ENCODE measurements at regions of chr16 and their contacts with region 1.

Region 1: GRCh38 chr16:67883872-67884261 is 818 bp upstream of the NRN1L start:
- DNase-seq: peak in 1 of 2 experiments; percentile 90
- H3K4me3 ChIP-seq: no peak overlapping the region
- H3K27ac ChIP-seq: no peak overlapping the region
- H3K4me1 ChIP-seq: peaks cover 5 to 15% (median 11%) of the 10 kb centered on the region in 4 experiments
- H3K27me3 ChIP-seq: no peaks in the 10 kb centered on the region
- CTCF ChIP-seq: peak; percentile 87 to 94 (median 88)
- EP300 ChIP-seq: peak in 1 of 2 experiments; percentile 31; a peak in 1 of 3 replicates
- POLR2A ChIP-seq: no peak
- RAD21 ChIP-seq: peak; percentile 83 to 87

Region 2: GRCh38 chr16:67775273-67775672 is 108.6 kb before region 1 on chr16:
- CTCF ChIA-PET with region 1: no interaction called
- POLR2A ChIA-PET with region 1: no interaction called
- DNase-seq: no peak
- H3K4me3 ChIP-seq: no peak overlapping the region
- H3K27ac ChIP-seq: no peak overlapping the region
- H3K4me1 ChIP-seq: peaks cover 0 to 1% (median 0%) of the 10 kb centered on the region in 4 experiments; a peak in 1 of 7 replicates
- H3K27me3 ChIP-seq: no peaks in the 10 kb centered on the region
- CTCF ChIP-seq: no peak
- EP300 ChIP-seq: no peak
- POLR2A ChIP-seq: no peak
- RAD21 ChIP-seq: no peak

Region 3: DNA sequence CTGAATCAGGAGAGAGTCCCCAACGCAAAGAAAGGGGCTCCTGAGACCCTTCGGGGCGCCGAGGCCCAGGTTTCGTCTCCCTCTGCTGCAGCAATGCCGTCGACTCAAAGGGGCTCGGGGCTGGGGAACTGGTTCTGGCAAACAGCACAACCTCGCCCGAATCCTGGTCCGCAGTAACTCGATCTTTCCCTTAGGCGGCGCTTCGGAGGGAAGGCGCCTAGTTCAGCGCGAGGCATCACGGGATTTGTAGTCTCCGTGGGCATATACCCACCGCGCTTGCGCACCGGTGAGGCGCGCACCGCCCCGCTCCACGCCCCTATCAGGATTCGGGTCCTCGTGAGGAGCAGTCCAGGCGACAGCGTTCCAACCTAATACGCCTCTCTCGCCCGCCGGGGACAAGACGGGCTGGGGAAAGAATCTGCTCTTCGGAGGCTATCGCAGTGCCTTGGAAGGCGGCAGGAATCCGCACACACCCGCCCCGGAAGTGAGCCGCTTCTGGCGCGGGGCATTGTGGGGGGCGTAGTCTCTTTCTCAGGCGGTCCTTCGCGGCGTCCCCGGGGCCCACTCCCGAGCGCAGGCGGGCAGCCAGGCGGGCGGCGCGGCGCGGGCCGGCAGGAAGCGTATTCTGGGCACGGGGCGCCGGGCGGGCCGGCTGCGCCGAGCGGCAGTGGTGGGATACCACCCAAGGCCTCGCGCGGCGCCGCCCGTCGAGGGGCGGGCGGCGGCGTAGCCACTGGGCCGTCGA is 41.9 kb before region 1 on chr16 and contains the start of gene THAP11:
- CTCF ChIA-PET with region 1: interaction called, 15 read pairs
- POLR2A ChIA-PET with region 1: interaction called, 5 read pairs
- DNase-seq: peak; percentile 91 to 97
- H3K4me3 ChIP-seq: peak within 1 kb of the TSS; percentile 84 to 97 (median 95)
- H3K27ac ChIP-seq: peak within 1 kb of the TSS; percentile 97
- H3K4me1 ChIP-seq: peaks cover 8 to 32% (median 17%) of the 10 kb centered on the region in 4 experiments
- H3K27me3 ChIP-seq: no peaks in the 10 kb centered on the region
- CTCF ChIP-seq: peak; percentile 81 to 94 (median 87)
- EP300 ChIP-seq: no peak
- POLR2A ChIP-seq: peak; percentile 83 to 93
- RAD21 ChIP-seq: peak; percentile 24 to 38; a peak in 3 of 4 replicates
- total RNA-seq, gene THAP11: 54.8 and 56.4 TPM in 2 replicates

Region 4: DNA sequence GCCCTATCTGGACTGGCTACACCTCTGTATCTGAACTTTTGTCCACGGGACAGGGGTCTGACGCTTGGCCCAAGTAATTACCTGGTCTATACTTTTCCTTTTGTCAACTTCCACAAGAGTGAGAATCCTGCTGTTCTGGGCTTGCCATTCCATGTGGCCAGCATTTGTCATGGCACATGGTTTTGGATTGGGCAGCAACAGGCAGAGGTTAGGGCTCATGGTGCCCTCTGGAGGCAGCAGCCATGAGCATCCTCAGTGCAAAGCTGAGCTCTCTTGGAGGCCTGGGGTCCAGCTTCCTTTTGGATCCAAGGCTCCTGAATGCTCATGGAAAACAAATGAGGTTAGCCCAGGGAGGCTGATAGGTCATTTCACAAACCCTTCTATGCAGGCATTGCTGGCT is 18.6 kb before region 1 on chr16:
- CTCF ChIA-PET with region 1: interaction called, 20 read pairs
- POLR2A ChIA-PET with region 1: interaction called, 3 read pairs
- DNase-seq: no peak
- H3K4me3 ChIP-seq: no peak overlapping the region
- H3K27ac ChIP-seq: no peak overlapping the region
- H3K4me1 ChIP-seq: peaks cover 0 to 4% (median 0%) of the 10 kb centered on the region in 4 experiments; a peak in 2 of 7 replicates
- H3K27me3 ChIP-seq: no peaks in the 10 kb centered on the region
- CTCF ChIP-seq: peak; percentile 76 to 83 (median 79)
- EP300 ChIP-seq: no peak
- POLR2A ChIP-seq: no peak
- RAD21 ChIP-seq: peak; percentile 80 to 82

Region 5: DNA sequence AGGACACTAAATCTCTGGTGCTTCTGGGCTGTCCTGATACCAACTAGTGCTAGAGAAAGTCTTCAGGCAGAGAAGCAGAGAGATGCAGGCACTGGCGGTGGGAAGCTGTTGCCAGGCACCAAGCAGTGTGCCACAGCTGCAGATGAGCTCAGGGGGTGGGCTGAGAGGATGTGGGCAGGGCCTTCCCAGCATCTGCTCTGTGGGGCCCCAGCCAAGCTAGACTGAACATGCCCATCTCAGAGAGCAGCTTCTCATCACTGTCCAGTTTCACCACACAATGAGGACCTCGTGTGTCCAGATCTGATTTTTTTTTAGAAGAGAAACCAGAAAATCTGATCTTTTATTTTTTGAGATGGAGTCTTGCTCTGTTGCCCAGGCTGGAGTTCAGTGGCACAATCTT is 26.3 kb after region 1 on chr16:
- CTCF ChIA-PET with region 1: interaction called, 46 read pairs
- POLR2A ChIA-PET with region 1: interaction called, 4 read pairs
- DNase-seq: no peak
- H3K4me3 ChIP-seq: no peak overlapping the region
- H3K27ac ChIP-seq: no peak overlapping the region
- H3K4me1 ChIP-seq: peaks cover 0 to 6% (median 3%) of the 10 kb centered on the region in 4 experiments; a peak in 4 of 7 replicates
- H3K27me3 ChIP-seq: no peaks in the 10 kb centered on the region
- CTCF ChIP-seq: no peak
- EP300 ChIP-seq: no peak
- POLR2A ChIP-seq: no peak
- RAD21 ChIP-seq: no peak

Region 6: GRCh38 chr16:67928561-67929364 is 44.9 kb after region 1 on chr16:
- CTCF ChIA-PET with region 1: interaction called, 623 read pairs
- POLR2A ChIA-PET with region 1: interaction called, 45 read pairs
- DNase-seq: peak in 1 of 2 experiments; percentile 91
- H3K4me3 ChIP-seq: no peak overlapping the region
- H3K27ac ChIP-seq: no peak overlapping the region
- H3K4me1 ChIP-seq: peaks cover 0 to 8% (median 4%) of the 10 kb centered on the region in 4 experiments; a peak in 5 of 7 replicates
- H3K27me3 ChIP-seq: no peaks in the 10 kb centered on the region
- CTCF ChIP-seq: peak; percentile 96 to 100 (median 96)
- EP300 ChIP-seq: no peak
- POLR2A ChIP-seq: no peak
- RAD21 ChIP-seq: peak; percentile 94

Region 7: GRCh38 chr16:68005786-68006286 is 122.0 kb after region 1 on chr16:
- CTCF ChIA-PET with region 1: no interaction called
- POLR2A ChIA-PET with region 1: no interaction called
- DNase-seq: no peak
- H3K4me3 ChIP-seq: no peak overlapping the region
- H3K27ac ChIP-seq: no peak overlapping the region
- H3K4me1 ChIP-seq: peaks cover 0 to 6% (median 3%) of the 10 kb centered on the region in 4 experiments; a peak in 3 of 7 replicates
- H3K27me3 ChIP-seq: no peaks in the 10 kb centered on the region
- CTCF ChIP-seq: no peak
- EP300 ChIP-seq: no peak
- POLR2A ChIP-seq: no peak
- RAD21 ChIP-seq: no peak